ENCODE measurements at regions of chr19 and their contacts with region 1.

Region 1: GRCh38 chr19:45886427-45887199 is 672 bp upstream of the IRF2BP1 start:
- DNase-seq: peak; percentile 85
- H3K4me3 Mint-ChIP-seq: peak overlapping the region; percentile 88
- H3K27ac Mint-ChIP-seq: peak overlapping the region; percentile 88
- H3K4me1 Mint-ChIP-seq: peaks cover 13% of the 10 kb centered on the region
- H3K27me3 Mint-ChIP-seq: no peaks in the 10 kb centered on the region

Region 2: GRCh38 chr19:45817010-45817724 is 69.4 kb before region 1 on chr19:
- intact Hi-C with region 1: loop called (anchors 1 kb)
- DNase-seq: peak; percentile 91
- H3K4me3 Mint-ChIP-seq: no peak overlapping the region
- H3K27ac Mint-ChIP-seq: no peak overlapping the region
- H3K4me1 Mint-ChIP-seq: peaks cover 3% of the 10 kb centered on the region
- H3K27me3 Mint-ChIP-seq: no peaks in the 10 kb centered on the region

Region 3: DNA sequence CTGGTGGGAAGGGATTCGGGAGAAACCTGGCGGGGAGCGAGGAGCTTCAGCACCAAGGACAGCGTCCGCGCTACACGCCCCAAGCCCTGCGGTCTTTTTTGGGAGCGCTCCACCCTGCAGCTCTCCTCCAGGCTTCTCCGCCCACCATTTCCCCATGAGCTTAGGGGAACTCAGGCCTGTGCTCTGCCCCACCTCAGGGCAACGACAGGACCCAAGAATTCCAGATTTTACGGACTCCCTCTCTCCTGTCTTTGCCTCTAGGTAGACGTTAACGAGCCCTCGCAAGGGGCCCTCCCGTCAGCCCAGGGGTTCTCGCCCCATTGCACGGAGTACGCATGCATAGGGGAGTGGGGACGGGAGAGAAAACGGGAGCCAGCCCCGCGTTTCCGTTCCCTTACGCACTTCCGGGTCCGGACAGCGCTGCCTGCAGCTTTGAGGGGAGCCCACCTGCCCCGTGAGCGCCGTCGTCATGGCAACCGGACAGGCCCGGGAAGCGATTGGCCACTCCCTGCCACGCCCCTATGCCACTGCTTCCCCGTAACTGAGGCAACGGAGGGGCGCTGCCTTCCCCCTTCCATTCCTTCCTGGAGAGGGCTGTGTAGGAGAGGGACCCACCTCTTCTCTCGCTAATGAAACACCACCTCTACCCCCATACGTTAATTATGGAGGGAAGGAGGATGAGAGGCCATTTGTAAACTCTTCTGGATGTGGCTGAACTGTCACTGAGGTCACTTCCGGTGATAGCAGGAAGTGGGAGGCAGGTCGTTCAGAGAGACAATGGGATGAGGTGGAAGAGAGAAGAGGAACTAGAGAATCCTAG is 66.3 kb after region 1 on chr19:
- intact Hi-C with region 1: no loop called
- DNase-seq: peak; percentile 37
- H3K4me3 Mint-ChIP-seq: peak overlapping the region; percentile 63
- H3K27ac Mint-ChIP-seq: no peak overlapping the region
- H3K4me1 Mint-ChIP-seq: peaks cover 14% of the 10 kb centered on the region
- H3K27me3 Mint-ChIP-seq: peaks cover 6% of the 10 kb centered on the region

Region 4: DNA sequence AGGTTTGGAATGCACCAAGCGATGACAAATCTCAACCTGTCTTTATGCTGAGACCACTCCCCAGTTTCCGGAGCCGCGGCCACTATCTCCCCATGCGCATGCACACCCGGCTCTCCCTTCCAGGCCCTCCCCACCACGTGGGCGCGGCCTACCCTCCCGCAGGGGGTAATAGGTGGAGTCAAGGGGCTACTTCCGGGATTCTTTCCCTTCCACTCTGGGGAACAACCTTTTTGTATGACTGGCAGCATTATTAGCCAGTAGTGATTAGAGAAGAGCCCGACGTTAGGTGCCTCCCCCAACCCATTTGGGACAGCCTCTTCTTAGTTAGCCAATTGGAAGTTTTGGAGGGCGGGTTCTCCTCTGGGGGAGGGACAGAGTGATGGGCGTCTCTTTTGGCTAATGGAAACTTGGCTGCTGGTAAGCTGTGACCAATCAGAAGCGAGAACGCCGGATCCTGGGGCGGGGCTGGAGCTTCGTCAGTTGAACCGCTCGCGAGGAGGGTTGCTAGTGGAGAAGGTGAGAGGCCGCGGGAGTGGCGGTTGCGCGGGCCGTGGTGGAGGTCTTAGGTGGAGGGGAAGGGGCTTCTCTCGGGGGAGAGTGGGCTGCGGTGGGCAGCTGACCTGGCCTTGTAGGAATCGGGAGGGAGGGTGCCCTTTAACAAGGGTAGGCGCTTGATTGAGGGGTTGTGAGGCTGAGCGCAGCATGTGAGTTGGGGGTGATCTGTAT is 108.5 kb after region 1 on chr19 and contains the start of gene CCDC61:
- intact Hi-C with region 1: loop called (anchors 1 kb)
- DNase-seq: peak; percentile 96
- H3K4me3 Mint-ChIP-seq: no peak within 1 kb of the TSS
- H3K27ac Mint-ChIP-seq: peak within 1 kb of the TSS; percentile 29
- H3K4me1 Mint-ChIP-seq: peaks cover 12% of the 10 kb centered on the region
- H3K27me3 Mint-ChIP-seq: peaks cover 5% of the 10 kb centered on the region
- total RNA-seq, gene CCDC61: 25.3 and 31.2 TPM in 2 replicates